Activated CD8-positive, alpha-beta memory T cell treated with anti-CD3 and anti-CD28 coated beads, Interleukin-2, amount 10 ng/mL, durations not matched to agents 7 days and 5 days (primary cell): ENCODE measurements at regions of chr1 and their contacts with region 1.

Region 1: DNA sequence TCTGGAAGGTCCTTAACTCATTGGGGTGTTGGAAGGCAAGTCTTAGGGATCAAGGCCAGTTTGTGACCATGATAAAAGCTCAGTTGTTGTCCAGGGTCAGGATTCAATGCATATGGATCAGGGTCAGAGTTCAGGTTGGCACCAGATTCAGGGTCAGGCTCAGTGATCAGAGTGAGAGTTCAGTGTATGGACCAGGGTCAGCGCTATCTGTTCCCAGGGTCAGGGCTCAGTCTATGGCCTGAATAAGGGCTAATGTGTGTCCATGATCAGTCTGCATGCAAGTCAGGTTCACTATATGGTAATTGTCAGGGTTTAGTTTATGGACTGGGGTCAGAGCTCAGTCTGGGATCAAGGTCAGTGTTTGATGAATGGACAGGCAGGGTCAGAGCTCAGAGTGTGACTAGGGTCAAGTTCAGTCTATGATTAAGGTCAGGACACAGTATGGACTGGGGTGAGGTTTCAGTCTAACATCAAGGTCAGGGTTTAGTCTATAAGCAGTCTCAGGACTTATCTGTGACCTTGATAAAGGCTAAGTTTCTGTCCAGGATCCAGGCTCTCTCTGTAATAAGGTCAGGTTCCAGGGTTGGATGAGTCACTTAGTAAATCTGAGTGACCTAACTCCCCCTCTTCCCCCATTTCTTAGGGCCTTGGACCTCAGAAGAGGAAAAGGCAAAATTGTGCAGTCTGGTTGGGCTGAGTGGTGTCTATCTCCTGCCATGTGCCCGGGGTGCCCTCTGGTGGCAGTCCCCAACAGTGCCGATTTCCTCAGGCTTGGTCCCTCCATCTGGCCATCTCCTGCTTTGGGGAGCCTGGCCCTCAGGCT is 23.8 kb downstream of the KNCN start:
- DNase-seq: peak; percentile 85
- ATAC-seq: peak; percentile 76
- H3K4me3 Mint-ChIP-seq: no peak overlapping the region
- H3K27ac Mint-ChIP-seq: no peak overlapping the region
- H3K4me1 Mint-ChIP-seq: peaks cover 42% of the 10 kb centered on the region
- H3K27me3 Mint-ChIP-seq: peaks cover 28% of the 10 kb centered on the region

Region 2: GRCh38 chr1:46236882-46237281 is 290.8 kb before region 1 on chr1:
- CTCF ChIA-PET with region 1: no interaction called
- DNase-seq: no peak
- ATAC-seq: no peak
- H3K4me3 Mint-ChIP-seq: no peak overlapping the region
- H3K27ac Mint-ChIP-seq: no peak overlapping the region
- H3K4me1 Mint-ChIP-seq: peaks cover 3% of the 10 kb centered on the region
- H3K27me3 Mint-ChIP-seq: peaks cover 2% of the 10 kb centered on the region

Region 3: DNA sequence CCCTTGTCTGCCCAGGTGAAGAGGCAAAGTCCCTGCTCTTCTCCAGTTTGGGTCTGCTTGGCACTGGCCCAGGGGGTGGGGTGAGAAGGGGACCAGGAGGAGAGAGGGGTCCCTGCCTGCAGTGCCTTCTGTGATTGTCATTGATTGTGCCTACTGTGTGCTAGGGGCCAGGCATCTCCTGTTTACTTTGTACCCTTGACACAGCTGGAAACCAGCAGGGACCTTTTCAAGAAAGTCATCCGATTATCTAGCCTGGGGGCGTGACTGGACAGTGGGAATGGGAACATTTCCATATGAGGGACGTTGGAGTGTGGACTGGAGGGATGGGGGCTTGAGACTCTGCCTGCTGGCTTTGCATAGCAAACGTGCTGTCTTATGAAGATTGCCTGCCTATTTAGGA is 57.8 kb before region 1 on chr1:
- CTCF ChIA-PET with region 1: interaction called, 10 read pairs
- DNase-seq: no peak
- ATAC-seq: no peak
- H3K4me3 Mint-ChIP-seq: no peak overlapping the region
- H3K27ac Mint-ChIP-seq: no peak overlapping the region
- H3K4me1 Mint-ChIP-seq: peaks cover 6% of the 10 kb centered on the region
- H3K27me3 Mint-ChIP-seq: peaks cover 47% of the 10 kb centered on the region

Region 4: DNA sequence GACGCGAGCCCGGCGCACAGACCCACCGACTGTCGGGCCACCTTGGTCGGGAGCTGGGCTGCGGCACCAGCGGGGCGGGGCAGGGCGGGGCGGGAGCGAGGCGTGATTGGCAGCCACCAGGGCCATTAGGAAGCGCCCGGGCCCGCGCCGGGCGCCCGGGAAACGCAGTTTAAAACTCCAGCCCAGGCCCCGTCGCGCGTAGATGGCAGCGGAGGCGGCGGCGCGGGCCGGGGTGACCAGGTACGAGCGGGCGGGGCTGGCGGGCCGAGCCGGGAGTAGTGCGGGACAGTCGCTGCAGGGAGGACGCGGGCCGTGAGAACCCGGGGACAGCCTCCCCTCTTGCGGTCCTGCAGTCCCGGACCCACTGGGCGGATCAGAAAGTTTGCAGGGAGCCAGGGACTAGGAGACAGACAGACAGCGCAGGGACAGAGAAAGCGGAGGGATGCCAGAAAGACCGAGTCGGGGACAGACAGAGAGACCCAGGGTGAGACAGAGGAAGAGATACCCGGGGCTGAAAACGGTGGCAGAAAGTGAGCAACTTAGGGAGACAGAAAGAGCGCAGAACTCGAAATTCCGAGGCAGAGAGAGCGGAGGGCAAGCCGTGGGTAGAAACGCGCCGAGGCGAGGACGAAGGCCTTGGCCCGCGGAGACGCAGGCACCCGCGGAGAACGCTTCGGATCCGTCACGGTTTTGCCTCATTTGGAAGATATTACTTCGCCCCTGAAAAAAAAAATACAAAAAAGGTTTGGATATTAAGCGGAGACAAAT is 37.9 kb before region 1 on chr1 and contains the start of gene DMBX1:
- CTCF ChIA-PET with region 1: interaction called, 35 read pairs
- DNase-seq: peak; percentile 59
- ATAC-seq: peak; percentile 83
- H3K4me3 Mint-ChIP-seq: peak within 1 kb of the TSS; percentile 70
- H3K27ac Mint-ChIP-seq: peak within 1 kb of the TSS; percentile 55
- H3K4me1 Mint-ChIP-seq: peaks cover 19% of the 10 kb centered on the region
- H3K27me3 Mint-ChIP-seq: peaks cover 96% of the 10 kb centered on the region
- total RNA-seq, gene DMBX1: 0.15 TPM in 1 of 2 experiments, not detected in the other

Region 5: DNA sequence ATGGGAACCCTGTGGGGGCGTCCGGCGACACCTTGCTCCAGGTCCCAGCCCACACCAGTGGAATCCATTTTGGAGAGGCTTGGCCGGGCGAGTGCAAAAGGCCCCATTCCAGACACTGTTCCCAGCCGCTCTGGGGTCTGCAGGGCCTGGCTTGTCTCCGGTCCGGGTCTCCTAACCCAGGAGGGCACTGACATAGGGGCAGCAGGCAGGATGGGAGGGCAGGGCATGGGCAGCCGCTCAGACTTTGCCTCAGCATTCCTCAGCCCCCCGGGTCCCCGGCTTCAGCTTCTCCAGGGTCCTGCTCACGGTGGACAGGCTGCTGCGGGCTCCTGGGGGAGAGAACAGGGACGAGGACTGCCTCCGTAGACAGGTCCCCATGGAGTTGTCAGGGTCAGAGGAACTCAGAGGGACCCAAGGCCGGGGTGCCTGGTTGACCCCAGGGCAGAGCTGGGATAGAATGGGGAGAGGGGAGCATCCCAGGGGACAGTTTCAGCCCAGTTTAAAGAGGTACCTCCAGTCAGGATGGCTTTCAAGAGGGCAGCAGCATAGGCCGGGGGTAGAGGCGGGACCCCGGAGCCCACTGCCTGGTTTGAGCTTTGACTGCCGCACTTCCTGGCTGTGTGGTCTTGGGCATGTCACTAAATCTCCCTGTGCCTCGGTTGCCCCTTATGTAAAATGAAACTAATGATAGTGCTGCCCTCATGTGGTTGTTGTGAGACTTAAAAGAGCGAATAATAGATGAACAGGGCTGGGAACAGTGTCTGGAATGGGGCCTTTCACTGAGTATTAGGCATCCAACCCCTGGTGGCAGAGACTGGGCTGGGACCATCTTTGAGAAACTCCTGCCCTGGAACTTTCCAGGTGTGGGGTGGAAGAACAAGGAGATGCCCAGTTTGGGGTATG is 20.0 kb after region 1 on chr1:
- CTCF ChIA-PET with region 1: interaction called, 74 read pairs
- DNase-seq: no peak
- ATAC-seq: peak; percentile 25
- H3K4me3 Mint-ChIP-seq: no peak overlapping the region
- H3K27ac Mint-ChIP-seq: peak overlapping the region; percentile 70
- H3K4me1 Mint-ChIP-seq: peaks cover 21% of the 10 kb centered on the region
- H3K27me3 Mint-ChIP-seq: peaks cover 40% of the 10 kb centered on the region

Region 6: DNA sequence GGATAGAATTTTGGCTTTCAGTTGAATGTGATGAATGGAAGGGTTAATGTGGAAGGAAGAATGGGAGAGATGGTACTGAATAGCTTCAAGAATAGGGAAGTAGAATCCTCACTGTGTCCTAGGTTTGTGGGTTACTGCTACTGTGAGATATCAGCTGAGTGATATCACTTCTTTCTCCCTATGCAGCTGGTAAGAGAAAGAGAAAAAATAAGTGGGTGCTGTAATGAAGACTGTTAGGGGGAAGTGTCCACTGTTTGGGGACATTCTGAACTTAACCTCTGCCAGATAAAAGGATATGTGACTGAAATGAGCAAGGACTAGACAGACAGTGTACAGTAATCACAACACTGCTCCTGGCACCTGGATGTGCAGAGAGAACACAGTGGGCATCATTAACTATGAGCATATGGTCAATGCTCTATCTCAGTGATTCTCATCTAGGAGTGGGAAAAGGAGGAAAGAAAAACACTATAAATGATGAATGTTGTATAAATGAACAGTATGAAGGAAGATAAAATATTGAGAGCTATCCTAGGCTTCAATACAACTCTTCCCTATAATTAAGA is 114.5 kb after region 1 on chr1:
- CTCF ChIA-PET with region 1: no interaction called
- DNase-seq: no peak
- ATAC-seq: no peak
- H3K4me3 Mint-ChIP-seq: no peak overlapping the region
- H3K27ac Mint-ChIP-seq: no peak overlapping the region
- H3K4me1 Mint-ChIP-seq: no peaks in the 10 kb centered on the region
- H3K27me3 Mint-ChIP-seq: no peaks in the 10 kb centered on the region

Region 7: DNA sequence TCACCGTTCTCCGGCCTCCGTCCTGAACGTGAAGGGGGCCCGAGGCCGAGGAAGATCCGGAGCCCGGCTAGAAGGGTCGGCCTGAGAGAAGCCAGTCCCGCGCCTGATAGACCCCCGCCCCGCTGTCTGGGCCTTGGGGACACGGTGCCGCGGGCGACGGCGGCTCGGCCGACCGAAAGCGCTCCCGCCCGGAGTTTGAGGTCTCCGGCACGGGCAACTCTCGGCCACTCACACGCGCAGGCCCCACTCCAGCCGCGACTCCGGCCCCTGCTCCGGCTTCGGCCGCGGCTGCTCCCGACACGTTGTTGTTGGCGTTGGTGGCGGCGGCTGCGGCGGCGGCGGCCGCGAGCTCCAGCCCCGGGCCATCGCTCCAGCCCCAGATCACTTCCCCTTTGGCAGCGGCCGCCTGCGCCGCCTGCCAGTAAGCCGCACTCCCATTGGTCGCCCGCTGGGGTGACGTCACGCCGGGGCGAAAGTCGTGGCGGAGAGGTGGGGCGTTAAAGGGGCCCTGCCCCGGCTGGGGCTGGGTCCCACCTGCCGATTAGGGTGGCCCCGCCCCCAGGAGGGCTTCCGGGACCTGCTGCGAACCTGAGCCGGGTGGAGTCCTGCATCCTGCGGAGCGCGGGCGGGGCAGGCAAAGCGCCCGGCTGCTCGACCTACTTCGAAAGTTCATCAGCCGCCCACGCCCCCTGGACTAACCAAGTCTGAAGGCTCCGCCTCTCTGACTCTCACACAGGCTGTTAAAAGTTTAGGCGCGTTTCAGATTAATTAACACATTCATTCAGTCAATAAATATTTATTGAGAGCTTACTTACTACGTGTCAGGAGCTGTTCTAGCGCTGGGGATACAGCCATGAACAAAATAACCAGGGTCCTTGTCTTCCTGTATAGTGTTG is 191.3 kb after region 1 on chr1 and contains the start of gene EFCAB14:
- CTCF ChIA-PET with region 1: interaction called, 68 read pairs
- DNase-seq: peak; percentile 99
- ATAC-seq: peak; percentile 99
- H3K4me3 Mint-ChIP-seq: peak within 1 kb of the TSS; percentile 92
- H3K27ac Mint-ChIP-seq: peak within 1 kb of the TSS; percentile 91
- H3K4me1 Mint-ChIP-seq: peaks cover 37% of the 10 kb centered on the region
- H3K27me3 Mint-ChIP-seq: no peaks in the 10 kb centered on the region
- total RNA-seq, gene EFCAB14: 79.2 to 79.4 TPM